ENCODE measurements at regions of chr3 and their contacts with region 1.

Region 1: DNA sequence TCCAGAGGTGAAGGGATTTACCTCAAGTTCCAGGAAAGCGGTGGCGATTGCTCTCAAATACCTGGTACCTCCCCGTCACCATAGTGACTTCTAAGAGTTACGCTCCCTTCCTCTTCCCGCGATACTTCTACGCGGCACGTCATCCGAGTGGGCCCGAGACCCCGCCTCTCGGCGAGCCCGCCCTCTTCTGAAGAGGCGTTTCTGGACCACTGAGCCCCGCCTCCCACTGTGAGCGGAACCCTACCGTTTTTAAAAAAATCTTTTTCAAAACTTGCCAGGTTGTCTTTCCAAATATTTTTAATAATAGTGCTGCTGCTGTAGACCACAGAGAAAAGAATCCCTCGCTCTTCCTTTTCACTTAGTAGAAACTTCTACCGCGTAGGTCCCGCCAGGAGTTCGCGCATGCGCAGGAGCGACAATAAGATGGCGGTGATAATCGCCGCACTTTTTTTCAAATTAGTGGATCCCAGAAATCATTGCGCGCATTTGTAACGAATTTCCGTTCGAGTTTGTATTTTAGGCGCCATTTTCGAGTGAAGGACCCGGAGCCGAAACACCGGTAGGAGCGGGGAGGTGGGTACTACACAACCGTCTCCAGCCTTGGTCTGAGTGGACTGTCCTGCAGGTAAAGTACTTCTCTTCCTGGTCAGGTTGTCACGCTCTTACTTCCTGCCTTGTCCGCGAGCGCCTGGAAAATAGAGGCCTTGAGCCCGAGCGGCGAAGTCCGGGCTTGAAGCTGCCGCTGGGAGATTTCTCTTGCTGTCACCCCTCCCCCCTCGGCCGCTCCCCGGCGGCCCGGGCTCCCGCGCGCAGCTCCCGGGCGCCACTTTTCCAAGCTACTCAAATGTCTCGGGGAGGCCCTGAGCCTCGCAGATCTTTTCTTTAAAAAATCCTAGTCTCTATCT is at the starts of genes IFT80 and SMC4:
- DNase-seq: peak; percentile 93 to 98 (median 95)
- ATAC-seq: peak; percentile 95
- H3K4me3 ChIP-seq: peak within 1 kb of the TSS; percentile 89
- H3K4me3 Mint-ChIP-seq: peak within 1 kb of the TSS; percentile 93
- H3K27ac ChIP-seq: peak within 1 kb of the TSS; percentile 84 to 96
- H3K27ac Mint-ChIP-seq: peak within 1 kb of the TSS; percentile 97
- H3K4me1 ChIP-seq: peaks cover 22% of the 10 kb centered on the region
- H3K4me1 Mint-ChIP-seq: peaks cover 58% of the 10 kb centered on the region
- H3K27me3 ChIP-seq: peaks cover 0 to 4% of the 10 kb centered on the region in 2 experiments
- H3K27me3 Mint-ChIP-seq: peaks cover 29% of the 10 kb centered on the region
- CTCF ChIP-seq: no peak
- total RNA-seq, gene IFT80: 16.1 to 18.2 TPM
- total RNA-seq, gene SMC4: 52.3 to 58.8 TPM

Region 2: DNA sequence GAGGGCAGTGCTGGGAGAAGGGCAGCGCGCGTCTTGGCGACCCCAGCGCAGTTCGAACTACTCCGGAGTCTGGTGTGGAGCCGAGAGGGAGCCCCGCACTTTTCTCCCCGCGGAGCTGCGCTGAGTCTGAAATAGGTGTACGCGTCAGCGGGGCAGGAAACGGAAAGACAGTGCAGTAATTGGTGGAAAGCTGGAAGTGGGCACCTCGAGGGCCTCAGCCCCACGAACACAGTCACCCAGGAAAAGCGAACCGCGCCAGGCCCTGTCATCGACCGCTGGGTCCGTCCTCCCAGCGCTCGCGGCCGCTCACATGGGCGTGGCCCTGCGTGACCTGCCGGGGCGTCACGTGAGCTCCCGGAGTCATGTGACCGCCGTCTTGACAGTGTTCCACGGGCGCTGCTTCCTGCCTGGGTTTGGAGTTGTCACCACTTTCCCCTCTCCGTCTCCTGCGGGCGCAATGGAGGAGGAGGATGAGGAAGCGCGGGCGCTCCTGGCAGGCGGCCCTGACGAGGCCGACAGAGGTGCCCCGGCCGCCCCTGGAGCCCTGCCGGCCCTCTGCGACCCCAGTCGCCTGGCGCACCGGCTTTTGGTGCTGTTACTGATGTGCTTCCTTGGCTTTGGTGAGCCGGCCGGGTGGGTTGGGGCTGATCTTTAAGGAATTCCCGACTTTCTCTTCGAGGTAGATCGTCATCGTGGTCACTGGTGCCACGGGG is 1597.5 kb before region 1 on chr3 and contains the start of gene MFSD1:
- CTCF ChIA-PET with region 1: no interaction called
- POLR2A ChIA-PET with region 1: interaction called, 3 read pairs
- intact Hi-C with region 1: loop called in 1 of 2 experiments (anchors 5 kb)
- DNase-seq: peak; percentile 71 to 95 (median 83)
- ATAC-seq: peak; percentile 91
- H3K4me3 ChIP-seq: peak within 1 kb of the TSS; percentile 89
- H3K4me3 Mint-ChIP-seq: peak within 1 kb of the TSS; percentile 92
- H3K27ac ChIP-seq: peak within 1 kb of the TSS; percentile 78 to 80
- H3K27ac Mint-ChIP-seq: peak within 1 kb of the TSS; percentile 91
- H3K4me1 ChIP-seq: peaks cover 18% of the 10 kb centered on the region
- H3K4me1 Mint-ChIP-seq: peaks cover 58% of the 10 kb centered on the region
- H3K27me3 ChIP-seq: no peaks in the 10 kb centered on the region
- H3K27me3 Mint-ChIP-seq: no peaks in the 10 kb centered on the region
- CTCF ChIP-seq: no peak
- total RNA-seq, gene MFSD1: 7.2 to 7.6 TPM

Region 3: GRCh38 chr3:160163229-160163878 is 236.0 kb before region 1 on chr3:
- CTCF ChIA-PET with region 1: no interaction called
- POLR2A ChIA-PET with region 1: no interaction called
- intact Hi-C with region 1: no loop called
- DNase-seq: peak in 3 of 14 experiments; percentile 23 to 28 (median 23)
- ATAC-seq: no peak
- H3K4me3 ChIP-seq: no peak overlapping the region
- H3K4me3 Mint-ChIP-seq: no peak overlapping the region
- H3K27ac ChIP-seq: no peak overlapping the region
- H3K27ac Mint-ChIP-seq: no peak overlapping the region
- H3K4me1 ChIP-seq: no peaks in the 10 kb centered on the region
- H3K4me1 Mint-ChIP-seq: no peaks in the 10 kb centered on the region
- H3K27me3 ChIP-seq: no peaks in the 10 kb centered on the region
- H3K27me3 Mint-ChIP-seq: peaks cover 5% of the 10 kb centered on the region
- CTCF ChIP-seq: peak; percentile 47

Region 4: GRCh38 chr3:160449636-160450598 is 50.5 kb after region 1 on chr3 and contains the start of gene TRIM59:
- CTCF ChIA-PET with region 1: interaction called, 3 read pairs
- POLR2A ChIA-PET with region 1: interaction called, 29 read pairs
- intact Hi-C with region 1: loop called (anchors 2 kb)
- DNase-seq: peak; percentile 91 to 99 (median 96)
- ATAC-seq: peak; percentile 97
- H3K4me3 ChIP-seq: peak within 1 kb of the TSS; percentile 81
- H3K4me3 Mint-ChIP-seq: peak within 1 kb of the TSS; percentile 95
- H3K27ac ChIP-seq: peak within 1 kb of the TSS; percentile 74 to 84
- H3K27ac Mint-ChIP-seq: peak within 1 kb of the TSS; percentile 95
- H3K4me1 ChIP-seq: peaks cover 22% of the 10 kb centered on the region
- H3K4me1 Mint-ChIP-seq: peaks cover 38% of the 10 kb centered on the region
- H3K27me3 ChIP-seq: no peaks in the 10 kb centered on the region
- H3K27me3 Mint-ChIP-seq: no peaks in the 10 kb centered on the region
- CTCF ChIP-seq: no peak
- total RNA-seq, gene TRIM59: 16.2 to 16.4 TPM

Region 5: GRCh38 chr3:160754855-160755747 is 355.7 kb after region 1 on chr3:
- CTCF ChIA-PET with region 1: no interaction called
- POLR2A ChIA-PET with region 1: interaction called, 4 read pairs
- intact Hi-C with region 1: loop called in 1 of 2 experiments (anchors 5 kb)
- DNase-seq: peak; percentile 80 to 95 (median 88)
- ATAC-seq: peak; percentile 85
- H3K4me3 ChIP-seq: peak overlapping the region; percentile 93
- H3K4me3 Mint-ChIP-seq: peak overlapping the region; percentile 94
- H3K27ac ChIP-seq: peak overlapping the region; percentile 51 to 81
- H3K27ac Mint-ChIP-seq: peak overlapping the region; percentile 89
- H3K4me1 ChIP-seq: peaks cover 27% of the 10 kb centered on the region
- H3K4me1 Mint-ChIP-seq: peaks cover 42% of the 10 kb centered on the region
- H3K27me3 ChIP-seq: peaks cover 7% of the 10 kb centered on the region in 2 experiments
- H3K27me3 Mint-ChIP-seq: peaks cover 21% of the 10 kb centered on the region
- CTCF ChIP-seq: no peak

Region 6: GRCh38 chr3:160771811-160772459 is 372.6 kb after region 1 on chr3:
- CTCF ChIA-PET with region 1: no interaction called
- POLR2A ChIA-PET with region 1: no interaction called
- intact Hi-C with region 1: no loop called
- DNase-seq: no peak
- ATAC-seq: no peak
- H3K4me3 ChIP-seq: no peak overlapping the region
- H3K4me3 Mint-ChIP-seq: no peak overlapping the region
- H3K27ac ChIP-seq: no peak overlapping the region
- H3K27ac Mint-ChIP-seq: no peak overlapping the region
- H3K4me1 ChIP-seq: no peaks in the 10 kb centered on the region
- H3K4me1 Mint-ChIP-seq: no peaks in the 10 kb centered on the region
- H3K27me3 ChIP-seq: no peaks in the 10 kb centered on the region
- H3K27me3 Mint-ChIP-seq: no peaks in the 10 kb centered on the region
- CTCF ChIP-seq: no peak

Region 7: GRCh38 chr3:161220850-161221753 is 821.7 kb after region 1 on chr3 and contains the start of gene NMD3:
- CTCF ChIA-PET with region 1: no interaction called
- POLR2A ChIA-PET with region 1: no interaction called
- intact Hi-C with region 1: loop called in 1 of 2 experiments (anchors 5 kb)
- DNase-seq: peak; percentile 83 to 95 (median 88)
- ATAC-seq: peak; percentile 97
- H3K4me3 ChIP-seq: peak within 1 kb of the TSS; percentile 86
- H3K4me3 Mint-ChIP-seq: peak within 1 kb of the TSS; percentile 95
- H3K27ac ChIP-seq: peak within 1 kb of the TSS; percentile 73 to 77
- H3K27ac Mint-ChIP-seq: peak within 1 kb of the TSS; percentile 94
- H3K4me1 ChIP-seq: peaks cover 21% of the 10 kb centered on the region
- H3K4me1 Mint-ChIP-seq: peaks cover 46% of the 10 kb centered on the region
- H3K27me3 ChIP-seq: peaks cover 0 to 6% of the 10 kb centered on the region in 2 experiments
- H3K27me3 Mint-ChIP-seq: peaks cover 13% of the 10 kb centered on the region
- CTCF ChIP-seq: no peak
- total RNA-seq, gene NMD3: 58.4 to 60.1 TPM

Measured in CD4-positive, alpha-beta T cell (primary cell).